Right ventricle myocardium superior (tissue), 1 donor: ENCODE measurements at regions of chr4 and their contacts with region 1.

Region 1: DNA sequence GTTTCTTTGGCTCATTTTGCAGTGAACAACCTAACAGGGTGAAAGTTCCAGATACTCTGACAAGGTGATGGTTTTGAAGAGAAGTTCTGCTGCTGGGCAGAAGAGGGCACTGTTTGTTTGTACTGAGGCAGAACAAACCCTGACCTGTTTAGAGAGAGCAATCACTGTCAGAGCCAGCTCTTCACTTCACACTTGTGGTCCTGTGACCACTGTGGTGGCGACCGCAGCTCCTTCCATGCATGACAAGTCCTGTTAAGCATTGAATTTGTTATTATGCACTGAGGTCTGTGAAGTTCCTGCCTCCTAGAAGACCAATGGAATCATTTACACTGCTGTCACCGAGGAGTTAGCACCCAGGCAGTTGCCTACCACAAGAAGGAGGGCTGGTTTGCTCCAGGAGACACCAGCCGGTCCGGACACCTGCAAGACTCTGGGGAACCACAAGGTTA is 86.6 kb downstream of the ZNF330 start:
- DNase-seq: peak; percentile 49
- ATAC-seq: peak; percentile 95

Region 2: DNA sequence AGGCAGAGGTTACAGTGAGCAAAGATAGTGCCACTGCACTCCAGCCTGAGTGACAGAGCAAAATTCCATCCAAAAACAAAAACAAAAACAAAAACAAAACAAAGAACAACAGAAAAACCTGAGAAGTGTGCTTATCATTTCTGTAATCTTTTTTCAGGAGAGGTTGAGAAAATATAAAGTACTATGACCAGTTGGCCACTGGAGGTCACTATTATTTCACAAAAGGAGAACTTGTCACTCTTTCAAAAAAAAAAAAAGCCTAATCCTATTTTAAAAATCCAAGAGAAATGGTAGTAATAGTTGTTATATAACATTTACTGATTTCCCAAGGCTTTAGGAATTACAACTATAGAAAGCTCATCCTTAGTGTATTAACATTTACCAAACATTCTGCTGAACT is 149.0 kb before region 1 on chr4:
- intact Hi-C with region 1: loop called (anchors 10 kb)
- DNase-seq: no peak
- ATAC-seq: no peak

Region 3: GRCh38 chr4:141548791-141549190 is 241.5 kb after region 1 on chr4:
- intact Hi-C with region 1: no loop called
- DNase-seq: no peak
- ATAC-seq: no peak